Prostate gland (tissue), 2 donors: ENCODE measurements at regions of chr1 and their contacts with region 1.

Region 1: DNA sequence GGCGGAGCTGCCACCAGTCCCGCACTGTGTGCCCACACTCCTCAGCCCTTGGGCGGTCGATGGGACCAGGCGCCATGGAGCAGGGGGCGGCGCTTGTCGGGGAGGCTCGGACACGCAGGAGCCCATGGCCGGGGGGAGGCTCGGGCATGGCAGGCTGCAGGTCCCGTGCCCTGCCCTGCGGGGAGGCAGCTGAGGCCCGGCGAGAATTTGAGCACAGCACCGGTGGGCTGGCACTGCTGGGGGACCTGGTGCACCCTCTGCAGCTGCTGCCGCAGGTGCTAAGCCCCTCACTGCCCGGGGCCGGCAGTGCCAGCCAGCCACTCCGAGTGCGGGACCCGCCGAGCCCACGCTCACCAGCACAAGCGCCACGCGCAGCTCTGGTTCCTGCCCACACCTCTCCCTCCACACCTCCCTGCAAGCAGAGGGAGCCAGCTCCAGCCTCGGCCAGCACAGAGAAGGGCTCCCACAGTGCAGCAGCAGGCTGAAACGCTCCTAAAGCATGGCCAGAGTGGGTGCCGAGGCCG is 267.7 kb downstream of the RYR2 start:
- DNase-seq: no peak
- H3K4me3 ChIP-seq: no peak overlapping the region
- H3K27ac ChIP-seq: no peak overlapping the region
- H3K4me1 ChIP-seq: no peaks in the 10 kb centered on the region
- H3K27me3 ChIP-seq: no peaks in the 10 kb centered on the region
- CTCF ChIP-seq: no peak
- POLR2A ChIP-seq: no peak

Region 2: DNA sequence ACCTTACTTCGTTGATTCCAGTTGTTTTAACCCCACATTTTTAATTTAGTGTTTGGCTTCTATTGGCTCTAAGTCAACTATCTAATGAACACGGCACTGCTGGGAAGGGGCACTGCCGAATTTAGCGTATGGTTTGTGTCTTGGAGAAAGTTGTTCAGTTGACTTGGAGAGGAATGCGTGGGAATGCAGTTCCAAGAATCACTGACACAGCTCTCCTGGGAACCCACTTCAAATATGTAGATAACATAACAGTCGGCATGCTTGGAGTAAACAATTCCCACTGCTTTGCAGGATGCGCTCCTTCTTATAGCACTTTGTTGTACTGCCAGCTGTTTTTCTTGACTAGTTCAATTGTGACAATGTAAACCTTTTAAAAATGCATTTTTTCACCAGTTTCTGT is 163.4 kb before region 1 on chr1:
- intact Hi-C with region 1: loop called (anchors 10 kb)
- DNase-seq: no peak
- H3K4me3 ChIP-seq: no peak overlapping the region
- H3K27ac ChIP-seq: no peak overlapping the region
- H3K4me1 ChIP-seq: no peaks in the 10 kb centered on the region
- H3K27me3 ChIP-seq: no peaks in the 10 kb centered on the region
- CTCF ChIP-seq: no peak
- POLR2A ChIP-seq: no peak